ENCODE measurements at regions of chr2 and their contacts with region 1.

Region 1: GRCh38 chr2:73085691-73086360 is 14.3 kb upstream of the SFXN5 start:
- DNase-seq: peak; percentile 63 to 94 (median 84)
- ATAC-seq: peak; percentile 66 to 89 (median 89)
- H3K4me3 ChIP-seq: no peak overlapping the region
- H3K27ac ChIP-seq: no peak overlapping the region
- H3K4me1 ChIP-seq: no peaks in the 10 kb centered on the region
- H3K27me3 ChIP-seq: no peaks in the 10 kb centered on the region
- CTCF ChIP-seq: peak; percentile 78 to 93 (median 92)

Region 2: DNA sequence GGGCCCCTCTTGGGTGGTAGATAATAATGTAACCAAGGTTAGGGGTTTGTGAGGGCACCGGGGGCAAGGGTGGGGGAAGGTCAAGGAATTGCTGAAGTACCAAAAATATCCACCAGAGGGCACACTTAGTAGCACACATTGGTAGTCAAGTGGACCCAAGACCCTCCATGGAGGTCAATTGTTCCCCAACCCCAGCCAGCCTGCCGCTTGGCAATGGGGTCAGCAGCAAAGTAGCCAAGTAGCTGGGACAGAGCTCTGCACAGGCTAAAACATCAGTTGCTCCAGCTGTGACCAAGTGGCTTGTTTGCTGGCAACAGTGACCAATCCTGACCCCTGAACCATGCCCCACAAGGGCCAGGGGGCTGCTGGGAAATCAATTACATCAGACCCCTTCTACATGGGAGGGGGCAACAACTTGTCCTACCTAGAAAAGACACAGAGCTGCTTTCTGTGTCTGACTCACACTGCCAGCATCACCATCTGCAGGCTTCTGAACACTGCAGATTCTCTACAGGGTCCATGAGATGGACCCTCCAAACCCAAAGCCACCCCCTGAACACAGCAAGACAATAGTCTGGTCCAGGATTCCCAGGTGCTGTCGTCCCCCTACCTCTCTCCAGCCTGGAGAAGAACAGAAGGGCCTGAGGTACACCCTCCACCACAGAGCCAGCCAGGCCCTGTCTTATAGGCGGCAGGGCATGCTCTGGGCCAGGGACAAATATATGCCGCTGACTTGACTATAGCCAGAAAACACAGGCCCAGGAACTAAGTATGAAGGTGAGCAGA is 92.5 kb before region 1 on chr2:
- intact Hi-C with region 1: loop called in 1 of 3 experiments (anchors 10 kb)
- DNase-seq: peak in 1 of 6 donors; percentile 42
- ATAC-seq: peak in 3 of 4 donors; percentile 53 to 70 (median 63)
- H3K4me3 ChIP-seq: no peak overlapping the region
- H3K27ac ChIP-seq: no peak overlapping the region
- H3K4me1 ChIP-seq: no peaks in the 10 kb centered on the region
- H3K27me3 ChIP-seq: no peaks in the 10 kb centered on the region
- CTCF ChIP-seq: peak; percentile 69 to 85 (median 82)

Region 3: DNA sequence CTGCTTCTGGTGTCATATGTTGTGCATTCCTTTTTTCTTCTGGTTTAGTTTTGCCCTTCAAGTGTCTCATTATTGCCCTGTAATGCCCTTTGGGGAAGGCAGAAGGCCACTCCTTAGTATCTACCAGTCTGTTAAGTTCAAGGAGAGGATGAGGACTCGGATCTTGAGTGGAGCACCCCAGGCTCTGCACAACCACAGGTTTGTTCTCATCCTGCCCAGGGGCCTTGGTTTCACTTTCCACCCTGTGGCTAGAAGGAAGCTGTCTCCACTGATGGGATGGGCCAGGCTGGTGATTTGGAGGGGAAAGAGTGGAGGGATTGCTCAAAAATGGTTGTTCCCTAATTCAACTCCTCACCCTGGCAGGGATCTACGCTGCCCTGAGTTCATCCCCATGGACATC is 57.1 kb after region 1 on chr2:
- intact Hi-C with region 1: loop called in 1 of 3 experiments (anchors 10 kb)
- DNase-seq: no peak
- ATAC-seq: no peak
- H3K4me3 ChIP-seq: no peak overlapping the region
- H3K27ac ChIP-seq: no peak overlapping the region
- H3K4me1 ChIP-seq: no peaks in the 10 kb centered on the region
- H3K27me3 ChIP-seq: no peaks in the 10 kb centered on the region
- CTCF ChIP-seq: no peak

Region 4: DNA sequence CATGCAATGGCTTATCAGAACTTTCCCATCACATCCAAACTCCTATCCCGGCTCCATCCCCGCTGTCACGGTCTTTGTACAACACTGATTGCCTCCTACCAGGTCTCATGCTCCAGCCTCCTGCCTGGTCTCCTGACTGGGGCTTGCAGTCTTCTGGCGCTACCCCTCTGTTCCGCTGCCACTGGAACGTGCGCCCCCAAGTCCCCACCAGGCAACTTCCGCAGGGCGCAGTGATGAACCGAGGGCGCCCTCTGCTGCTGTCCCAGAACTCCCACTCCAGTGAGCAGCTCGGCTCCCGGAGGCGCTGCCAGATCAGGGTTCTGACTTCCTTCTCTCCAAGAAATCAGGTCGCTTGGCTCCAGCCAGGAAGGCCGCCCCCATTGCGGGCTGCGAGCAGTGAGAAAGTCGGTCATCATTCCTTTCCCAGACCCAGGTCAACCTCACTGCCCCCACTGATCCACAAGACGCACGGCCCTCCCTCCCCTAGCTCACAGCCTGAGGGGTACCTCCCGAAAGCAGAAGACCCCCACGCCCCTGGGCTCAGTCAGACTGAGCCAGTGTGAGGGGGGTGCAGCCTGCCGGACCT is 70.8 kb after region 1 on chr2:
- intact Hi-C with region 1: loop called in 2 of 3 experiments (anchors 5 kb)
- DNase-seq: peak; percentile 36 to 85 (median 60)
- ATAC-seq: peak; percentile 63 to 99 (median 93)
- H3K4me3 ChIP-seq: no peak overlapping the region
- H3K27ac ChIP-seq: no peak overlapping the region
- H3K4me1 ChIP-seq: no peaks in the 10 kb centered on the region
- H3K27me3 ChIP-seq: no peaks in the 10 kb centered on the region
- CTCF ChIP-seq: peak in 3 of 4 donors; percentile 45 to 61 (median 52)

Measured in pancreas (tissue), 10 donors.